ENCODE measurements at regions of chr7 and their contacts with region 1.

Region 1: GRCh38 chr7:85023045-85023712 is 163.7 kb downstream of the SEMA3D start:
- DNase-seq: peak; percentile 34
- ATAC-seq: no peak
- H3K4me3 ChIP-seq: no peak overlapping the region
- H3K27ac ChIP-seq: no peak overlapping the region
- H3K4me1 ChIP-seq: no peaks in the 10 kb centered on the region
- H3K27me3 ChIP-seq: no peaks in the 10 kb centered on the region
- CTCF ChIP-seq: peak; percentile 36 to 75 (median 70); a peak in 5 of 6 replicates
- POLR2A ChIP-seq: no peak
- RAD21 ChIP-seq: peak; percentile 83

Region 2: GRCh38 chr7:83936056-83936708 is 1087.0 kb before region 1 on chr7:
- CTCF ChIA-PET with region 1: interaction called, 72 read pairs
- POLR2A ChIA-PET with region 1: no interaction called
- RAD21 ChIA-PET with region 1: interaction called, 3 to 5 read pairs
- intact Hi-C with region 1: loop called (anchors 1 kb)
- DNase-seq: peak; percentile 69
- ATAC-seq: peak; percentile 87
- H3K4me3 ChIP-seq: no peak overlapping the region
- H3K27ac ChIP-seq: no peak overlapping the region
- H3K4me1 ChIP-seq: no peaks in the 10 kb centered on the region
- H3K27me3 ChIP-seq: no peaks in the 10 kb centered on the region
- CTCF ChIP-seq: peak; percentile 81 to 92 (median 89)
- POLR2A ChIP-seq: no peak
- RAD21 ChIP-seq: peak; percentile 91

Region 3: DNA sequence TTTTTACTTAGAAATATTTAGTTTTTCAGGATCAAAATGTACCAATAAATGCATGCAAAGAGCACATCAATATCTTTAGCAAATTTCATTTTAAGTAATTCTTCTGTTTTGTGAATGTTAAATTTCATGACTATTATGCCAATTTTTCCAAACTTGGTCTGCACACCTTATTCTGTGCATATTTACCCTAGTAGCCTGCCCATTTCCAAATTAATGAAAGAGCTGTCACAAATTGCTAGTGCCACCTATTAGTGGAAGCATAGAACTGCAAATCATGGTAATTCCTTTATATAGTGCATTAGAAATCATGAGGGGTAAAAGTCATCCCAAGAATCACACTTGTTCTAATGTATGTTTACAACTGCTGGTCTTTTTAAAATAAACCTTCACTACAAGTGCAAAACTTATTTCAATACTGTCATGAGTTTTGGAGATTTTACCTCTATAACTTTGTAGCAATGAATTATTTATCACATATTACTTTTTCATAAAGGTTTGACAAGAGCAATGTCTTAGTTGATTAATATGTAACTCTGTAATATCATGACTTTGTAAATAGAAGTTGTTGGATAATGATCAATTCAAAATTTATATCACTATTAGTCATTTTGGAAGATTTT is 834.3 kb before region 1 on chr7:
- CTCF ChIA-PET with region 1: no interaction called
- POLR2A ChIA-PET with region 1: no interaction called
- RAD21 ChIA-PET with region 1: no interaction called
- intact Hi-C with region 1: loop called (anchors 5 kb)
- DNase-seq: no peak
- ATAC-seq: peak; percentile 72
- H3K4me3 ChIP-seq: no peak overlapping the region
- H3K27ac ChIP-seq: no peak overlapping the region
- H3K4me1 ChIP-seq: peaks cover 5 to 27% of the 10 kb centered on the region in 2 experiments; a peak in 3 of 4 replicates
- H3K27me3 ChIP-seq: no peaks in the 10 kb centered on the region
- CTCF ChIP-seq: peak; percentile 35 to 64 (median 44); a peak in 5 of 6 replicates
- POLR2A ChIP-seq: no peak
- RAD21 ChIP-seq: peak; percentile 70

Region 4: GRCh38 chr7:84614821-84615505 is 408.2 kb before region 1 on chr7:
- CTCF ChIA-PET with region 1: no interaction called
- POLR2A ChIA-PET with region 1: no interaction called
- RAD21 ChIA-PET with region 1: no interaction called
- intact Hi-C with region 1: loop called (anchors 10 kb)
- DNase-seq: peak; percentile 2
- ATAC-seq: no peak
- H3K4me3 ChIP-seq: no peak overlapping the region
- H3K27ac ChIP-seq: no peak overlapping the region
- H3K4me1 ChIP-seq: no peaks in the 10 kb centered on the region
- H3K27me3 ChIP-seq: no peaks in the 10 kb centered on the region
- CTCF ChIP-seq: peak; percentile 16 to 36 (median 23); a peak in 2 of 6 replicates
- POLR2A ChIP-seq: no peak
- RAD21 ChIP-seq: peak; percentile 29

Region 5: DNA sequence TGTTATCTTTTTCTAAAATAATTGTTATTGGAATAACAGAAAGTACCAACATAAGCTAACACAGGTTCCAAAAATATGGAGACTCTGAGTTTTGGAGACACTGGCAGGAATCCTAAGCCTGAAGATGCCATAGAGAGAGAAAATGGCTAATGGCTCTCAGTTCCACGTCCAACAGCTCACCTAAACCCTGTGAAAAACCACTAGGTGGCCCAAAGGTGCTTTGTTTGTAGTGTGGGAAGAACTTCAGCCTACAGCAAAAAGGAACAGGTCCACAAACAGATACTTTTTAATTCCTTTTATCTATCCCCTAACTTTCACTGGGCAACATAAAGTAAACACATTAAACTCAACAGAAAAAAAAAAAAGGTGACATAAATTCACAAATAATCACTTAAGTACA is 108.6 kb before region 1 on chr7:
- CTCF ChIA-PET with region 1: no interaction called
- POLR2A ChIA-PET with region 1: no interaction called
- RAD21 ChIA-PET with region 1: no interaction called
- intact Hi-C with region 1: loop called (anchors 5 kb)
- DNase-seq: peak; percentile 10
- ATAC-seq: peak; percentile 77
- H3K4me3 ChIP-seq: no peak overlapping the region
- H3K27ac ChIP-seq: no peak overlapping the region
- H3K4me1 ChIP-seq: peaks cover 0 to 5% of the 10 kb centered on the region in 2 experiments; a peak in 2 of 4 replicates
- H3K27me3 ChIP-seq: no peaks in the 10 kb centered on the region
- CTCF ChIP-seq: peak; percentile 20 to 38 (median 35); a peak in 4 of 6 replicates
- POLR2A ChIP-seq: no peak
- RAD21 ChIP-seq: peak; percentile 40; the same call in 1 of the 2 replicates

Region 6: DNA sequence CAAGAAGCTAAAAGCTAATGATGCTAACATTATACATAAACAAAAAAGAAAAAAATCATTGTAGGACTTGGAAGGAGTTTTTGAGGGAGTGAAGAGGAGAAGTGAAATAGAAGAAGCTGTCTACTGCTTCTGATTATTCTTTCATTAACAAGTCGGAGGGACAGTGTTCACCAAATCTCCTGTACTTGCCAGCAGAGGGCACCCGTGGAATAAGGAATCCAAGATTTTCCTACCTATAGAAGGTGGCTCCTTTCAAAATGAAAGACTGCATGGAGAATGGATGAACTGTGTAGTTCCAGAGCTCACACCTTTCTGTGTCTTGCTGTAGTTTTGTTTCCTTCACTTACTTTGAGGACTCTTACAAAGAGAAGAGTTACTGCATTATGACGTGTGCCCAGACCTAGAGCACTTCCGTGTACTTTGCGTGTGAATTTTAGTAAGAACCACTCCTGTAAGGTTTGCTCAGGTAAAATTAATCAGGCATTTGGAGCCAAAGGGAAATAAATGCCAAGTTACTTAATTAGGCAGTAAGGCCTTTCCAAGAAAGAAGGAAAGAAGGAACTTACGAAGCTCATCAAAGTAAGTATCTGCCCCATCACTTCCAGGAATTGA is 18.5 kb after region 1 on chr7:
- CTCF ChIA-PET with region 1: no interaction called
- POLR2A ChIA-PET with region 1: no interaction called
- RAD21 ChIA-PET with region 1: no interaction called
- intact Hi-C with region 1: no loop called
- DNase-seq: peak; percentile 62
- ATAC-seq: peak; percentile 89
- H3K4me3 ChIP-seq: no peak overlapping the region
- H3K27ac ChIP-seq: no peak overlapping the region
- H3K4me1 ChIP-seq: no peaks in the 10 kb centered on the region
- H3K27me3 ChIP-seq: no peaks in the 10 kb centered on the region
- CTCF ChIP-seq: peak; percentile 64 to 87 (median 77)
- POLR2A ChIP-seq: no peak
- RAD21 ChIP-seq: peak; percentile 88

Measured in HCT116 (cell line).